Mammary epithelial cell (primary cell): ENCODE measurements at regions of chr15 and their contacts with region 1.

Region 1: DNA sequence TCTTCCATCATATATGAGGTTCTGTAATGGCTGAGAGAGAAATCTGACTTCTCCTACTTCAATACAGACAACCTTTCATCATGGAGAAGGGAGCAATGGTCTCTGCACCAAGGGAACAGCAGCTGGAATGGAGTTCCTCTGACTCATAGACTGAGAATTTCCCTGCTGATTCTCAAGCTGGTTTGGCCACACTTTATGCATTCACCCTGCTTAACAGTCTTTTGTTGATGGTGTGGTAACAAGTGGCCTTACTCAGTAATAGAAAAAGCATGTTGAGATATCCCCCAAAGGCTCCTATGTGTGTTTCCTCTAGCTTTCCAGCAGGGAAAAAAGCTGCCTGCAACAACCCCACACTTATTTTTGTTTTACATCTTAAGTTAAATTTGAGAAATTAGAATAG is 138.1 kb downstream of the GREM1 start:
- DNase-seq: peak; percentile 92
- H3K4me3 ChIP-seq: no peak overlapping the region
- H3K27ac ChIP-seq: peak overlapping the region; percentile 58
- H3K4me1 ChIP-seq: peaks cover 45% of the 10 kb centered on the region
- H3K27me3 ChIP-seq: no peaks in the 10 kb centered on the region
- CTCF ChIP-seq: no peak

Region 2: GRCh38 chr15:32818758-32819447 is 37.0 kb before region 1 on chr15:
- CTCF ChIA-PET with region 1: no interaction called
- dilution Hi-C with region 1: no loop called
- in situ Hi-C with region 1: no loop called
- intact Hi-C with region 1: no loop called
- DNase-seq: no peak
- H3K4me3 ChIP-seq: no peak overlapping the region
- H3K27ac ChIP-seq: no peak overlapping the region
- H3K4me1 ChIP-seq: no peaks in the 10 kb centered on the region
- H3K27me3 ChIP-seq: no peaks in the 10 kb centered on the region
- CTCF ChIP-seq: no peak

Region 3: GRCh38 chr15:32867313-32867626 is 11.3 kb after region 1 on chr15:
- CTCF ChIA-PET with region 1: interaction called, 5 read pairs
- dilution Hi-C with region 1: no loop called
- in situ Hi-C with region 1: no loop called
- intact Hi-C with region 1: loop called (anchors 1 kb)
- DNase-seq: peak; percentile 69
- H3K4me3 ChIP-seq: no peak overlapping the region
- H3K27ac ChIP-seq: no peak overlapping the region
- H3K4me1 ChIP-seq: peaks cover 8% of the 10 kb centered on the region
- H3K27me3 ChIP-seq: no peaks in the 10 kb centered on the region
- CTCF ChIP-seq: no peak